IMR-90 (cell line): ENCODE measurements at regions of chr5 and their contacts with region 1.

Region 1: DNA sequence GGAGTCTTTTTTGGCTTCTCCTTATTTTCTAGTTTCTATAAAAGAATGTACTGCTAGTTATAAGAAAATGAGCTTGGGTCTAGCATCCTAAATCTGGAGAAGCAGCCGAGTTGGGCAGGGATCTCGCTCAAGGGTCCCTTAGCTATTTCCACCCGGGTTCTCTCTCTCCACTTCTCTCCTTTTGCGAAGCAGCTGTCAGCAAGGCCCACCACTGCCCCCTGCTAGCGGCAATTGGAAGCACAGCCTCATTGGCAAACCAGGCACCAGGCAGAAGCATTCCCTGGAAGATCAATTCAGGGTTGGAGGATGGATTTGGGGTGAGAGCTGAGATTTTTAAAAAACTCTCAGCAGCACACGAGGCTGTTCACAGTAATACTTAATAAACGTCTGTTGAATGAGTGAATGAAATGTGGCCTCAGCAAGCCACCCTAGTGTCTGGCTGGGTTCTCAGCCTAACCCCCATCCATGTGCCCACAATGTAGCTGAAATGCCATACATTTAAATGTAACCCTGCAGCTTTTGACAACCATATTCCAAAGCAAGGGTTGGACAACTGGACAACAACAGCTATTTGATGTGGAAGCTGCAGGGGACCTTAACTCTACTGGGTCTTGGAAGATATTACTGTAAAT is 34.6 kb upstream of the TNIP1 start:
- DNase-seq: peak; percentile 56
- ATAC-seq: peak; percentile 86
- H3K4me3 ChIP-seq: no peak overlapping the region
- H3K27ac ChIP-seq: no peak overlapping the region
- H3K4me1 ChIP-seq: no peaks in the 10 kb centered on the region
- H3K27me3 ChIP-seq: no peaks in the 10 kb centered on the region
- CTCF ChIP-seq: peak; percentile 80
- POLR2A ChIP-seq: no peak
- RAD21 ChIP-seq: peak; percentile 89

Region 2: DNA sequence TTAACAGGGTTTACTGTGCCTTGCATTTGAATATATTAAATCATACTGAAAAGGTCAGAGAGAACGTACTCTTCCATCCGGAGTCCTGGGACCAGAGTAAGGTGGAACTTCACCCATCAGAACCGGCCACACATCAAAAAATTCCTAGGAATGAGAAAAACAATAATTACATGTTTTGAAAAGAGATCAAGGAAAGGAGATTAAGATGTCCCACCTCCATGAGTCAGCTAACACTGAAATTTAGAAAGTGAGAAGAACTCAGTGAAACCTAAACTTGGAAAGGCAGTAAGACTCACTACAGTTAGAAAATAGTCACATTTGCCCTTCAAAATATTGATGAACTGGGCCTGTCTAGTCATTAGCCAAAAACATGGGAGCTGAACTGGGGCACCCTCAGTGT is 1193.8 kb before region 1 on chr5:
- CTCF ChIA-PET with region 1: no interaction called
- POLR2A ChIA-PET with region 1: no interaction called
- dilution Hi-C with region 1: no loop called
- in situ Hi-C with region 1: no loop called
- intact Hi-C with region 1: no loop called
- DNase-seq: no peak
- ATAC-seq: no peak
- H3K4me3 ChIP-seq: no peak overlapping the region
- H3K27ac ChIP-seq: no peak overlapping the region
- H3K4me1 ChIP-seq: peaks cover 3% of the 10 kb centered on the region; the same call in 1 of the 2 replicates
- H3K27me3 ChIP-seq: no peaks in the 10 kb centered on the region; the same call in none of the 2 replicates
- CTCF ChIP-seq: no peak
- POLR2A ChIP-seq: no peak
- RAD21 ChIP-seq: no peak

Region 3: GRCh38 chr5:150624334-150625163 is 490.8 kb before region 1 on chr5:
- CTCF ChIA-PET with region 1: no interaction called
- POLR2A ChIA-PET with region 1: no interaction called
- dilution Hi-C with region 1: no loop called
- in situ Hi-C with region 1: no loop called
- intact Hi-C with region 1: no loop called
- DNase-seq: no peak
- ATAC-seq: peak; percentile 52
- H3K4me3 ChIP-seq: peak overlapping the region; percentile 88
- H3K27ac ChIP-seq: peak overlapping the region; percentile 27; the same call in 1 of the 2 replicates
- H3K4me1 ChIP-seq: peaks cover 53% of the 10 kb centered on the region
- H3K27me3 ChIP-seq: no peaks in the 10 kb centered on the region
- CTCF ChIP-seq: no peak
- POLR2A ChIP-seq: no peak
- RAD21 ChIP-seq: no peak

Region 4: GRCh38 chr5:151002250-151002649 is 113.1 kb before region 1 on chr5:
- CTCF ChIA-PET with region 1: interaction called, 12 read pairs
- POLR2A ChIA-PET with region 1: no interaction called
- dilution Hi-C with region 1: no loop called
- in situ Hi-C with region 1: no loop called
- intact Hi-C with region 1: loop called (anchors 1 kb)
- DNase-seq: peak; percentile 41
- ATAC-seq: peak; percentile 46
- H3K4me3 ChIP-seq: no peak overlapping the region
- H3K27ac ChIP-seq: no peak overlapping the region
- H3K4me1 ChIP-seq: peaks cover 12% of the 10 kb centered on the region; the same call in 1 of the 2 replicates
- H3K27me3 ChIP-seq: peaks cover 11% of the 10 kb centered on the region
- CTCF ChIP-seq: peak; percentile 64
- POLR2A ChIP-seq: no peak
- RAD21 ChIP-seq: peak; percentile 72

Region 5: DNA sequence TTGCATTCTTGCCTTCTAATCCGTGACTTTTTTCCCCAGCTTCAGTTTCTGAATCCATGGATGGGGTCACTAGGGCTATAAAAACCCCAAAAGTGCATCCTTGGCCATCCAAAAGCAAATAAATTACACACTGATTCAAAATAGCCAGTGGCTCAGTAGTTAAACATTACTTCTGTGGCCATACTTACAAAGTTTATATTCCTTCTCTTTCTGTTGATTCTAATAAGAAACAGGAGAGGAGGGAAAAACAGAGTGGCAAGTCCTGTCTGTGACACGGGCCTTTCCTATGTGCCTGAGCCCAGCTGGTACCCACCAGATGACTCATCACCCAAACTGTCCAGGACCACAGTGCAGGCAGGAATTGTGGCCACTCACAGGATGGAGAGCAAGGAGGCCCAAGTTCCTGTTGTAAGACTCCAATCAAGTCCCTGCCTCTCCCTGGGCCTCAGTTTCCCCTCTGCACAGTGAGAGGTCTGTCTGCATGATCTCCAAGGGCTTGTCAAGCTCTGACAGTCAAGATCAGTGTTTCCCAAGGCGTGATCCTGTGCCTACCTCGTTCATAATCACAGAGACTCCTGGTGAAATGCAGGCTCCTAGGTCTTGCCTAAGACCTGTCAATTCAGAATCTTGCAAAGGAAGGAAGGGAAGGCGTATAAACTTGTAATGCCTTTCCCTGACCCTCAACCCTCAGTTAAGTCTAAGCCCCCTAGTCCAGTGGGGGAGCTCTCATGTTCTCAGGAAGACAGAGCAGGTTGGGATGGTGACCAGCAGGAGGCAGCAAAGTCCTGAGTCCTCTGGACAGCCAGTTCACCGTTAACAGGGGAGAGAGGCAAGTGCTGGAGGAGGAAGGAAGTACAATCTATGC is 64.1 kb before region 1 on chr5:
- CTCF ChIA-PET with region 1: interaction called, 61 read pairs
- POLR2A ChIA-PET with region 1: no interaction called
- dilution Hi-C with region 1: no loop called
- in situ Hi-C with region 1: loop called (anchors 5 kb)
- intact Hi-C with region 1: loop called (anchors 1 kb)
- DNase-seq: peak; percentile 75
- ATAC-seq: peak; percentile 96
- H3K4me3 ChIP-seq: no peak overlapping the region
- H3K27ac ChIP-seq: no peak overlapping the region
- H3K4me1 ChIP-seq: peaks cover 6% of the 10 kb centered on the region; the same call in 1 of the 2 replicates
- H3K27me3 ChIP-seq: no peaks in the 10 kb centered on the region
- CTCF ChIP-seq: peak; percentile 91
- POLR2A ChIP-seq: no peak
- RAD21 ChIP-seq: peak; percentile 94

Region 6: DNA sequence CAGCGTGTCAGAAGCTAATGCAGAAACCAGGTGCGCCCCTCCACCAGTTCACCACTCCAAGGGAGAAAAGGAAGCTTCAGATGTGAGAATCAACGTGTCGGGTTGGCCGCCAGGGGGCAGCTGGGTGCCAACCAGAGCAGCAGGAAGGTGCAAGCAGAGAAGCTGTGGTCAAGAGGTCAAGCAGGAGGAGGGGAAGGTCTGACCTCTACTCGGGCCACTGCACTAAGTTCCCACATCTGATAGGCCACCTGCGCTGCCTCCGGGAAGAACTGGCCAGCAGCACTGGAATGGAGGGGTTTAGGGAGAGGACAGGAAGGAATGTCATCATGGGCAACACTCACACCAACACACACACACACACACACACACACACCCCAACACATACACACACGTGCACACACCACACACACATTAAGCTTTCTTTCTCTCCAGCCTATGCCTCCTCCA is 10.8 kb after region 1 on chr5:
- CTCF ChIA-PET with region 1: interaction called, 11 read pairs
- POLR2A ChIA-PET with region 1: no interaction called
- dilution Hi-C with region 1: no loop called
- in situ Hi-C with region 1: no loop called
- intact Hi-C with region 1: no loop called
- DNase-seq: peak; percentile 51
- ATAC-seq: peak; percentile 79
- H3K4me3 ChIP-seq: no peak overlapping the region
- H3K27ac ChIP-seq: no peak overlapping the region
- H3K4me1 ChIP-seq: peaks cover 2% of the 10 kb centered on the region; the same call in 1 of the 2 replicates
- H3K27me3 ChIP-seq: no peaks in the 10 kb centered on the region
- CTCF ChIP-seq: peak; percentile 63
- POLR2A ChIP-seq: no peak
- RAD21 ChIP-seq: peak; percentile 63

Region 7: GRCh38 chr5:151288180-151288579 is 172.8 kb after region 1 on chr5:
- CTCF ChIA-PET with region 1: no interaction called
- POLR2A ChIA-PET with region 1: no interaction called
- dilution Hi-C with region 1: no loop called
- in situ Hi-C with region 1: no loop called
- intact Hi-C with region 1: no loop called
- DNase-seq: no peak
- ATAC-seq: no peak
- H3K4me3 ChIP-seq: no peak overlapping the region
- H3K27ac ChIP-seq: no peak overlapping the region
- H3K4me1 ChIP-seq: no peaks in the 10 kb centered on the region
- H3K27me3 ChIP-seq: no peaks in the 10 kb centered on the region; the same call in none of the 2 replicates
- CTCF ChIP-seq: no peak
- POLR2A ChIP-seq: no peak
- RAD21 ChIP-seq: no peak